ENCODE measurements at regions of chr19 and their contacts with region 1.

Region 1: DNA sequence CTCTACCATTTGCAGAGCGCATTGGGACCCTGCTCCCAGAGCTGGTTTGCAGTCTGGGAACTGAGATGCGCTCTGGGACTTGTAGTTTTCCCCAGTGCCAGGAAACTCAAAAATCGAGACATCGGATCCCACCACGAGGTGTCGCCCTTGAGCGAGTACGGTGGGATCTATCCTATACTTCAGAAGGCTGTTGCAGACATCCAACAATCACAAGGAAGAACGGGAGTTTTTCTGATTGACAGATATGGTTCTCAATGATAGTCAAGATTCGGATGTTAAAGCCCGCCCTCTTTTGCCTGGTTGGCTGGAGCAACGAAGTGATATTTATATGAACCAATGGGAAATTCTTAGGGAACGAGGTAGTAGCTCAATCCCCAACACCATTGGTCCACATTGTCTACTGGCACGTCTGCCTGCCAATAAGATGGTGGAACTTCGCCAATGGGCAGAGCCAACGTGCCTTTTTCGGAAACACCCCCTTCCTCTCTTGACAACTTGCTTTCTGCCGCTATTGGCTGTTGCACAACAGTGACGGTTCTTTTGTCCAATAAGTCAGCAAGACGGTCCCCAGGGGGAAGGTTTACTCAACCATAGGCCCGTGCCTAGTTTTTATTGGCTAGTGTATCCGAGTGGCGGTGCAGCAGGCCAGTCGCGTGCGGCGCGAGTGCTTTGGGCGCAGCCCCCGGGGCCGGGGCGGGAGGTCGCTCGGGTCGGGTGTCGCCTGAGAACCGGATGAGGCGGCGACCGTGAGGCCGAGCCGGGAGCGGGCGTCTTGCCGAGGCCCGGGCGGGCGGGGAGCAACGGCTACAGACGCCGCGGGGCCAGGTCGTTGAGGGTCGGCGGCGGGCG is at the start of gene DNM2:
- DNase-seq: peak; percentile 98
- H3K4me3 Mint-ChIP-seq: peak within 1 kb of the TSS; percentile 98
- H3K27ac Mint-ChIP-seq: peak within 1 kb of the TSS; percentile 88
- H3K4me1 Mint-ChIP-seq: peaks cover 43% of the 10 kb centered on the region
- H3K27me3 Mint-ChIP-seq: no peaks in the 10 kb centered on the region
- total RNA-seq, gene DNM2: 268 to 270 TPM

Region 2: DNA sequence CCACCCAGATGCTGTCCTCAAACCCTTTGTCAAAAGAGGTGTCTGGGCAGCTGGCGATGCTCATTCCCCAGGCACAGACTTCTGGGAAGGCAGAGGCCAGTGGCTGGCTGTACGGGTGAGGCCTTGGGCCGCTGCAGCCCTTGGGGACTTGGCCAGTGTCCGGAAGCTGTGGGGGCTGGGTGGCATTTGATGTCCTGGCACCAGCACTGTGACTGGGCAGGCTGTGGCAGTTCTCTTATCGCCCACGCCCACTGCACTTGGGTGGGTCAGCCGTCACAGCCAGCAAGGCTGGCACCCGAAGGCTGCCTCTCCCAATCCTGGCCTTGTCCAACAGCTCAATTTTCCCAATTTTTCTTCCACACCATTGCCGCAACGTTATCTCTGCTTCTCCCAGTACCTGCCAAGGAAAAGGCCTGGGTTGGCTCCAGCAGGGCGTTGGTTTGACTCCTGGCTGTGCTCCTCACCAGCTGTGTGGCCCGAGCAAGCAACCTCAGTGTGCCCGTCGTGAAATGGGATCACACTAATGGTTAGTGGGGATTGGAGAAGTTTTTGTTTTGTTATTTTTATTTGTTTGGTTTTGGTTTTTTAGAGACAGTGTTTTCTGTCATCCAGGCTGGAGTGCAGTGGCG is 105.0 kb before region 1 on chr19:
- CTCF ChIA-PET with region 1: no interaction called
- POLR2A ChIA-PET with region 1: no interaction called
- DNase-seq: no peak
- H3K4me3 Mint-ChIP-seq: no peak overlapping the region
- H3K27ac Mint-ChIP-seq: no peak overlapping the region
- H3K4me1 Mint-ChIP-seq: peaks cover 24% of the 10 kb centered on the region
- H3K27me3 Mint-ChIP-seq: no peaks in the 10 kb centered on the region

Region 3: DNA sequence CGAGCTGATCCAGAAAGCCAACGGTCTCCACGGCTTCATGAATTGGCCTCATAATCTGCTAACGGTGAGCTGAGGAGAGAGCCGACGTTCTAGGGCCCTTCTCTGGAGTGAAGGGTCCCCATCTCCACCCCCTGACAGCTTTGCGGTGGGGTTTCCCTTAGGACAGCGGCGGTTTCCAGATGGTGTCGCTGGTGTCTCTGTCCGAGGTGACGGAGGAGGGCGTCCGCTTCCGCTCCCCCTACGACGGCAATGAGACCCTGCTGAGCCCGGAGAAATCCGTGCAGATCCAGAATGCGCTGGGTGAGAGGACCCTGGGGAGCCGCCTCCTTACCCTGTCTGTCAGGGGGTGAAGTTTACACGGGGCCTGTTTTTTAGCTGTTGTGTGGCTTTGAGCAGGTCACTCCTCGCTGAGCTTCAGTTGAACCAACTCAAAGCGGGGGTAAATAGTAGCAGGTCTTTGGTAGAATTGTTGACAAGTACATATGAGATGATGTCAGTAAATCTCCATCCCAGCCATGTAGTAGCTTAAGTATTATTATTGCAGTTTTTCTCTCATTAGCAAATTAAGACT is 15.5 kb before region 1 on chr19:
- CTCF ChIA-PET with region 1: interaction called, 58 read pairs
- POLR2A ChIA-PET with region 1: no interaction called
- DNase-seq: peak; percentile 27
- H3K4me3 Mint-ChIP-seq: peak overlapping the region; percentile 79
- H3K27ac Mint-ChIP-seq: peak overlapping the region; percentile 85
- H3K4me1 Mint-ChIP-seq: peaks cover 13% of the 10 kb centered on the region
- H3K27me3 Mint-ChIP-seq: peaks cover 5% of the 10 kb centered on the region

Region 4: DNA sequence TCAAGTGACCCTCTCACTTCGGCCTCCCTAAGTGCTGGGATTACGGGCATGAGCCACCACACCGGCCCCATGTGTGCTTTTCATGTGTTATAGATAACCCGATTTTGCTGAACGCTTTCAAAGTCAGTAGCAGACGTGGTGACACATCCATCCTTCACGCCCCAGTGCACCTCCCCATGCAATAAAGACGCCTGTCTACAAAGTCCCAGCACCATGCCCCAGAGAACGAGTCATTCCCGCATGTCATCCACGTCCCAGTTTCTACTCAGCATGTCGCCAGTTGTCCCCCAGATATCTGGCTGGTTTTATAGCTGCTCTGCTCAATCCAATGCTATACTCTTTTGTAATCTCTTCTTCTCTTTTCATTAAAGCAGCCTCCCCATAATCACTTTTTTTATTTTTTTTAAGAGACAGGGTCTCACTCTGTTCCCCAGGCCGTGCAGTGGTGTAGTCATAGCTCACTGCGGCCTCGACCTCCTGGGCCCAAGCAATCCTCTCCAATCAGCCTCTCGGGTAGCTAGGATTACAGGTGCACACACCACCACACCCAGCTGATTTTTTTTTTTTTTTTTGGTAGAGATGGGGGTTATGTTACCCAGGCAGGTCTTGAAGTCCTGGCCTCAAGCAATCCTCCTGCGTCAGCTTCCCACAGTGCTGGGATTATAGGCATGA is 42.8 kb after region 1 on chr19:
- CTCF ChIA-PET with region 1: interaction called, 19 read pairs
- POLR2A ChIA-PET with region 1: no interaction called
- DNase-seq: peak; percentile 17
- H3K4me3 Mint-ChIP-seq: peak overlapping the region; percentile 50
- H3K27ac Mint-ChIP-seq: peak overlapping the region; percentile 86
- H3K4me1 Mint-ChIP-seq: peaks cover 87% of the 10 kb centered on the region
- H3K27me3 Mint-ChIP-seq: no peaks in the 10 kb centered on the region

Region 5: GRCh38 chr19:10835754-10836477 is 118.3 kb after region 1 on chr19 and contains the start of gene TMED1:
- CTCF ChIA-PET with region 1: interaction called, 24 read pairs
- POLR2A ChIA-PET with region 1: interaction called, 4 read pairs
- DNase-seq: peak; percentile 98
- H3K4me3 Mint-ChIP-seq: peak within 1 kb of the TSS; percentile 92
- H3K27ac Mint-ChIP-seq: peak within 1 kb of the TSS; percentile 99
- H3K4me1 Mint-ChIP-seq: peaks cover 22% of the 10 kb centered on the region
- H3K27me3 Mint-ChIP-seq: peaks cover 4% of the 10 kb centered on the region
- total RNA-seq, gene TMED1: 8.6 to 11.2 TPM

Region 6: GRCh38 chr19:10870955-10871603 is 153.5 kb after region 1 on chr19 and contains the start of gene CARM1:
- CTCF ChIA-PET with region 1: interaction called, 64 read pairs
- POLR2A ChIA-PET with region 1: no interaction called
- DNase-seq: peak; percentile 99
- H3K4me3 Mint-ChIP-seq: peak within 1 kb of the TSS; percentile 77
- H3K27ac Mint-ChIP-seq: peak within 1 kb of the TSS; percentile 88
- H3K4me1 Mint-ChIP-seq: peaks cover 34% of the 10 kb centered on the region
- H3K27me3 Mint-ChIP-seq: no peaks in the 10 kb centered on the region
- total RNA-seq, gene CARM1: 32.4 to 34.3 TPM